ENCODE measurements at regions of chr17 and their contacts with region 1.

Region 1: DNA sequence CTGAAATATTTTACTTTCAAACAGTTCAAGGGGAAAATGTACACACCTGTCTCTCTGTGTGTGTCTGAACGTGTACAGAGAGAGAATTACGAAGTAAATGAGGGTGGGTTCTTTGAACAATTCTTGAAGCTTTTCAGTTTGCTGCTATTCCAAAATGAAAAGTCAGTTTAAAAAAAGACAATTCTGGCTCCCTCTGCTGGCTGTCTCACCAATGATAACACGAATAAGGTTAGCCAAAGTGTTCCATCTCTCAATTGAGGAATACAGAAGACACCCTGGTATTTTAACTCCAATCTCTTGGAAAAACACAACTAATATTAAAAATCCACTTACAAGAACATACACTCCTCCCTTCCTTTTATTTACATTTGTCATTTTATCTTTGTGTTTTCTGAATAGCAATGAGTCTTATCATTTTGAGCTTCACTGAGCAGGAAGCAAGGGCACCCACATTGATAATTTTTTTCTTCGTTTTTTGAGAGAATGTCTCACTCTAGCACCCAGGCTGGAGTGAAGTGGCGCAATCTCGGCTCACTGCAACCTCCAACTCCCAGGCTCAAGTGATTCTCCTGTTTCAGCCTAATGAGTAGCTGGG is 20.5 kb downstream of the EFTUD2 start:
- DNase-seq: peak; percentile 49
- H3K4me3 ChIP-seq: no peak overlapping the region
- H3K27ac ChIP-seq: no peak overlapping the region
- H3K4me1 ChIP-seq: no peaks in the 10 kb centered on the region
- H3K27me3 ChIP-seq: no peaks in the 10 kb centered on the region
- CTCF ChIP-seq: peak; percentile 35 to 52
- POLR2A ChIP-seq: no peak

Region 2: GRCh38 chr17:44741316-44741715 is 137.4 kb before region 1 on chr17:
- CTCF ChIA-PET with region 1: no interaction called
- POLR2A ChIA-PET with region 1: no interaction called
- dilution Hi-C with region 1: no loop called
- intact Hi-C with region 1: no loop called
- DNase-seq: no peak
- H3K4me3 ChIP-seq: no peak overlapping the region
- H3K27ac ChIP-seq: no peak overlapping the region
- H3K4me1 ChIP-seq: no peaks in the 10 kb centered on the region
- H3K27me3 ChIP-seq: no peaks in the 10 kb centered on the region
- CTCF ChIP-seq: no peak
- POLR2A ChIP-seq: no peak

Region 3: GRCh38 chr17:44761932-44762810 is 116.6 kb before region 1 on chr17:
- CTCF ChIA-PET with region 1: interaction called, 15 read pairs
- POLR2A ChIA-PET with region 1: no interaction called
- dilution Hi-C with region 1: loop called (anchors 25 kb)
- intact Hi-C with region 1: no loop called
- DNase-seq: no peak
- H3K4me3 ChIP-seq: no peak overlapping the region
- H3K27ac ChIP-seq: no peak overlapping the region
- H3K4me1 ChIP-seq: peaks cover 5% of the 10 kb centered on the region
- H3K27me3 ChIP-seq: no peaks in the 10 kb centered on the region
- CTCF ChIP-seq: no peak
- POLR2A ChIP-seq: no peak

Region 4: GRCh38 chr17:44864866-44865660 is 13.7 kb before region 1 on chr17:
- CTCF ChIA-PET with region 1: interaction called, 40 read pairs
- POLR2A ChIA-PET with region 1: no interaction called
- dilution Hi-C with region 1: no loop called
- intact Hi-C with region 1: no loop called
- DNase-seq: peak; percentile 80
- H3K4me3 ChIP-seq: no peak overlapping the region
- H3K27ac ChIP-seq: no peak overlapping the region
- H3K4me1 ChIP-seq: peaks cover 14% of the 10 kb centered on the region
- H3K27me3 ChIP-seq: no peaks in the 10 kb centered on the region
- CTCF ChIP-seq: peak; percentile 82 to 84
- POLR2A ChIP-seq: no peak

Region 5: GRCh38 chr17:44892250-44892649 is 13.5 kb after region 1 on chr17:
- CTCF ChIA-PET with region 1: interaction called, 12 read pairs
- POLR2A ChIA-PET with region 1: no interaction called
- dilution Hi-C with region 1: no loop called
- intact Hi-C with region 1: no loop called
- DNase-seq: no peak
- H3K4me3 ChIP-seq: no peak overlapping the region
- H3K27ac ChIP-seq: no peak overlapping the region
- H3K4me1 ChIP-seq: no peaks in the 10 kb centered on the region
- H3K27me3 ChIP-seq: no peaks in the 10 kb centered on the region
- CTCF ChIP-seq: no peak
- POLR2A ChIP-seq: no peak

Region 6: DNA sequence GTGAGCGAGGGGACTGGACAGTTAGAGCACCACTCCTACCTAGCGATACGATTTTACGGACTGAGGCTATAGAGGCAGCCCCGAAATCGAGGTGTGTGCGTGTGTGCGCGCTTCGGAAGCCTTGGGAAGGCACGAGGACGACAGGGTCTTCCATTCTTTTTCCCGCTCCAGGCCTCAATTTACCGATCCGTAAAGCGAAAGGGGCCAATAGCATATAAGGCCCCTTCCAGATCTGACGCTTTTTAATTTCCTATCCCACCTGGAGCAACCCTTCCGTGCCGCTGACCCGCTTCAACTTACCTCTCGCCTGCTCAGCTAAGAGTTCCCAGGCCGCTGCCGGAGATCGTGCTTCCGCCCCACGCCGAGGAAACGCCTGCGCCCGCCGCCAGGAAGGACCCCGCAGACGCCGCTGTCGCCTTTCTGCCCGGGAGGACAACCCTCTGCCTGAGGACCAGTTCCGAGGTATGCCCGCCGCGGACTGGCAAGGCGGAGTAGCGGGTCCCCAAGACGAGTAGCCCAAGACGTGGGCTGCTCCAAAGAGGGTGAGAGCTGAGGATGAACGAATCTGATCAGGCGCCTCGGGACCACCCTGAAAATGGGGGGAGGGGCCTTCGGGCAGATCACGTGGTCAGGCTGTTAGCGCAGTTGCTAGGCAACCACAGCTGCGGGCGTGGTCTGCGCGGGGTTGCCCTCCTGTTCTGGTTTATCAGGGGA is 20.5 kb after region 1 on chr17 and contains the start of gene EFTUD2:
- CTCF ChIA-PET with region 1: interaction called, 19 read pairs
- POLR2A ChIA-PET with region 1: interaction called, 3 read pairs
- dilution Hi-C with region 1: no loop called
- intact Hi-C with region 1: no loop called
- DNase-seq: peak; percentile 93
- H3K4me3 ChIP-seq: peak within 1 kb of the TSS; percentile 67 to 97 (median 73)
- H3K27ac ChIP-seq: peak within 1 kb of the TSS; percentile 96
- H3K4me1 ChIP-seq: peaks cover 37% of the 10 kb centered on the region
- H3K27me3 ChIP-seq: no peaks in the 10 kb centered on the region
- CTCF ChIP-seq: no peak
- POLR2A ChIP-seq: peak; percentile 87
- total RNA-seq, gene EFTUD2: 170 and 171 TPM in 2 replicates

Region 7: DNA sequence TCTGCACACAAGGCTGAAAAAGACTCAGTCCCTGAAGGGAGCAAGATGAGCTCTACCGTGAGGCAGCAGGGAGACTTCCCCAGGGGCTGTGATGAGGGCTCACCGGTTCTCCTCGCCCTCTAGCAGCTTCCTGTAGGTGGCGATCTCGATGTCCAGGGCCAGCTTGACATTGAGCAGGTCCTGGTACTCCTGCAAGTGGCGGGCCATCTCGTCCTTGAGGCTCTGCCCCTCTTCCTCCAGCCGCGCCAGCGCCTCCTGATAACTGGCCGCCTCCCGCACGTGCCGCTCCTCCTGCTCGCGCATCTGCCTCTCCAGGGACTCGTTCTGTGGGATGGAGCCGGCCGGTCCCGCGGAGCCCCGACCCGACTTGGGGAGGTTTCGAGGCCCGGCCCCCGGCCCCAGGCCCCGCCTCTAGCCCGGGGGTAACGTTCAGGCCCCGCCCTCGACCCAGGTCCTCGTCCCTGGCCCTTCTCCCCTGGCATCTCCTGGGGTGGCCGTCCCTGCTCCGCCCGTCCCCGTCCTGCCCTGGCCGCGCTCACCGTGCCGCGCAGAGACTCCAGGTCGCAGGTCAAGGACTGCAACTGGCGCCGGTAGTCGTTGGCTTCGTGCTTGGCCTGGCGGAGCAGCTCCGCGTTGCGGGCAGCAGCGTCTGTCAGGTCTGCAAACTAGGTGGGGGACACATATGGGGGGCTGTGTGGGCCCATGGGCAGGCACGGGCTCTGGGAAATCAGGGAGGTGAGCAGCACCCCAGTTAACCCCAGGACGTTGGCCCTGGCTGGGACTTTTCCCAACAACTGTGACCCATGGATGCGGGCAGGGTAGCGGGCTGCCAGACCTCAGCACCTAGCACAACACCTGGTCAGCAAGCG is 32.6 kb after region 1 on chr17:
- CTCF ChIA-PET with region 1: no interaction called
- POLR2A ChIA-PET with region 1: no interaction called
- dilution Hi-C with region 1: no loop called
- intact Hi-C with region 1: no loop called
- DNase-seq: peak; percentile 36
- H3K4me3 ChIP-seq: no peak overlapping the region
- H3K27ac ChIP-seq: no peak overlapping the region
- H3K4me1 ChIP-seq: peaks cover 10% of the 10 kb centered on the region
- H3K27me3 ChIP-seq: no peaks in the 10 kb centered on the region
- CTCF ChIP-seq: peak; percentile 23 to 59
- POLR2A ChIP-seq: no peak

Region 8: GRCh38 chr17:44947461-44948314 is 69.0 kb after region 1 on chr17 and contains the start of gene KIF18B:
- CTCF ChIA-PET with region 1: no interaction called
- POLR2A ChIA-PET with region 1: no interaction called
- dilution Hi-C with region 1: no loop called
- intact Hi-C with region 1: no loop called
- DNase-seq: peak; percentile 92
- H3K4me3 ChIP-seq: peak within 1 kb of the TSS; percentile 30 to 90 (median 63)
- H3K27ac ChIP-seq: peak within 1 kb of the TSS; percentile 59
- H3K4me1 ChIP-seq: peaks cover 11% of the 10 kb centered on the region
- H3K27me3 ChIP-seq: no peaks in the 10 kb centered on the region
- CTCF ChIP-seq: no peak
- POLR2A ChIP-seq: peak; percentile 97
- total RNA-seq, gene KIF18B: 48.4 and 50.3 TPM in 2 replicates

Region 9: DNA sequence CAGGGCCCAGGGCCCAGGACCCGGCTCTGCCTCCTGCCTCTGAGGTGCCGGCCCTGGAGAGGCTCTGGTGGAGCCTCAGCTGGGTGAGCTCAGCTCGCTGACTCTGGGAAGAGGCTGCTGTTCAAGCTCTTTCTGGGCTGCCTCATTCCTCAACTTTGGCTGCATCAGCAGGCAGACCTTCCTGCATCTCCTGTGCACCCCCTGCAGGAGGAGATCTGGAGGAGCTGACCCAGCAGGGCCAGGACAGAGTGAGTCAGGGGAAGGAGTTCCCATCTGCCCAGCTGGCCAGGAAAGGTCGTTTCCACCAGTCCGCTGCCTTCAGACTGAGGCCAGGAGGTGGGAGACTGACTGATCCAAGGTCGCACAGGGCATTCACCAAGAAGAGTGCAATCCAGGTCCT is 916.1 kb after region 1 on chr17:
- CTCF ChIA-PET with region 1: no interaction called
- POLR2A ChIA-PET with region 1: no interaction called
- dilution Hi-C with region 1: no loop called
- intact Hi-C with region 1: no loop called
- DNase-seq: no peak
- H3K4me3 ChIP-seq: no peak overlapping the region
- H3K27ac ChIP-seq: no peak overlapping the region
- H3K4me1 ChIP-seq: no peaks in the 10 kb centered on the region
- H3K27me3 ChIP-seq: peaks cover 8 to 16% of the 10 kb centered on the region in 2 experiments
- CTCF ChIP-seq: no peak
- POLR2A ChIP-seq: no peak

Measured in endothelial cell of umbilical vein (primary cell).